Activated CD4-positive, alpha-beta memory T cell treated with anti-CD3 and anti-CD28 coated beads for 36 hours (primary cell): ENCODE measurements at regions of chr9 and their contacts with region 1.

Region 1: DNA sequence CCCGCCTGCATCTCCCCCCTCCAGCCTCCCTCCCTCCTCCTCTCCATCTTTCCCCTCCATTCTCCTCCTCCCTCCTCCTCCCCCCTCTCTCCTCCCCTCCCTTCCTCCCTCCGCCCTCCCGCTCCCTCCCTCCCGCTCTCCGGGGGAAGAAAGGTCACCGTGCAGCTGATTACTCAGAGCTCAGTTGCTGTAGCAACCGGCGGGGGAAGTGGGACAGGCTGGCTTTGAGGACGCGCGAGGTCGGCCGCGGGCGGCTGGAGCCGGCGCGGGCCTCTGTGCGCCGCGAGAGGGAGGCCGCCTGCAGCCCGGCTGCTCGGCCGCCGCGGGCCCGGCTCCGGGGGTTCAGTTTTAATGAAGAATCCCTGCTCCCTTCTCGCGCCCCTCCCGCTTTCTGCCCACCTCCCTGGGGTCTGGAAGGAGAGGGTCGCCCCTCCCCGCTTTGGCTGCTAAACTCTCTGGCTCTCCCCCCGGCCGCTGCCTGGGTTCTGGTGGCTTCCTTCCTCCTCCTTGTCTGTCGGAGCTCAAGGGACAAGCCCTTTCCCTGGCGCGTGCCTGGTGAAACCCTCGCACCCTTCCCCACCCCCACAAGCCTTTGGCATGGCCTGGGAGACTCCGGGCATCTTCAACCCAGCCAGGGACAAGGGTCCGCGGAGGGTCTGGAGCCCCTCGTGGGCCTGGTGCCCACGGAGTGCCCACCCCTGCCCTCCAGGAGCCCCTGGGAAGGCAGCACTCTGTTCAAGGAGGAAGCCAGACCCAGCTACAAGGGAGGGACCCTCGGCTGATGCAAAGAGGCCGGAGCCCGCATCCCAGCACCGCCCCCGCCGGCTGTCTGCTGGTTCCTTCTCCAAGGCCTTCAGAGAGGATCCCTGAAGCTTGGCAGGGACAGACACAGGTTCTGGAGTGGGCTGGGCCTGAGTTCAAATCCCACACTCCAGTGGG is 160.3 kb downstream of the C9orf50 start:
- DNase-seq: peak; percentile 95
- H3K4me3 Mint-ChIP-seq: peak overlapping the region; percentile 73
- H3K27ac Mint-ChIP-seq: peak overlapping the region; percentile 86
- H3K4me1 Mint-ChIP-seq: peaks cover 38% of the 10 kb centered on the region
- H3K27me3 Mint-ChIP-seq: no peaks in the 10 kb centered on the region

Region 2: GRCh38 chr9:129028192-129028957 is 432.2 kb before region 1 on chr9 and contains the start of gene SH3GLB2:
- CTCF ChIA-PET with region 1: no interaction called
- POLR2A ChIA-PET with region 1: no interaction called
- intact Hi-C with region 1: loop called (anchors 2 kb)
- DNase-seq: peak; percentile 97
- H3K4me3 Mint-ChIP-seq: peak within 1 kb of the TSS; percentile 84
- H3K27ac Mint-ChIP-seq: peak within 1 kb of the TSS; percentile 55
- H3K4me1 Mint-ChIP-seq: peaks cover 22% of the 10 kb centered on the region
- H3K27me3 Mint-ChIP-seq: no peaks in the 10 kb centered on the region
- total RNA-seq, gene SH3GLB2: 59.5 to 62.3 TPM

Region 3: GRCh38 chr9:129413537-129414376 is 46.8 kb before region 1 on chr9:
- CTCF ChIA-PET with region 1: no interaction called
- POLR2A ChIA-PET with region 1: interaction called, 4 read pairs
- intact Hi-C with region 1: loop called (anchors 2 kb)
- DNase-seq: peak; percentile 98
- H3K4me3 Mint-ChIP-seq: peak overlapping the region; percentile 73
- H3K27ac Mint-ChIP-seq: peak overlapping the region; percentile 98
- H3K4me1 Mint-ChIP-seq: peaks cover 14% of the 10 kb centered on the region
- H3K27me3 Mint-ChIP-seq: no peaks in the 10 kb centered on the region

Region 4: DNA sequence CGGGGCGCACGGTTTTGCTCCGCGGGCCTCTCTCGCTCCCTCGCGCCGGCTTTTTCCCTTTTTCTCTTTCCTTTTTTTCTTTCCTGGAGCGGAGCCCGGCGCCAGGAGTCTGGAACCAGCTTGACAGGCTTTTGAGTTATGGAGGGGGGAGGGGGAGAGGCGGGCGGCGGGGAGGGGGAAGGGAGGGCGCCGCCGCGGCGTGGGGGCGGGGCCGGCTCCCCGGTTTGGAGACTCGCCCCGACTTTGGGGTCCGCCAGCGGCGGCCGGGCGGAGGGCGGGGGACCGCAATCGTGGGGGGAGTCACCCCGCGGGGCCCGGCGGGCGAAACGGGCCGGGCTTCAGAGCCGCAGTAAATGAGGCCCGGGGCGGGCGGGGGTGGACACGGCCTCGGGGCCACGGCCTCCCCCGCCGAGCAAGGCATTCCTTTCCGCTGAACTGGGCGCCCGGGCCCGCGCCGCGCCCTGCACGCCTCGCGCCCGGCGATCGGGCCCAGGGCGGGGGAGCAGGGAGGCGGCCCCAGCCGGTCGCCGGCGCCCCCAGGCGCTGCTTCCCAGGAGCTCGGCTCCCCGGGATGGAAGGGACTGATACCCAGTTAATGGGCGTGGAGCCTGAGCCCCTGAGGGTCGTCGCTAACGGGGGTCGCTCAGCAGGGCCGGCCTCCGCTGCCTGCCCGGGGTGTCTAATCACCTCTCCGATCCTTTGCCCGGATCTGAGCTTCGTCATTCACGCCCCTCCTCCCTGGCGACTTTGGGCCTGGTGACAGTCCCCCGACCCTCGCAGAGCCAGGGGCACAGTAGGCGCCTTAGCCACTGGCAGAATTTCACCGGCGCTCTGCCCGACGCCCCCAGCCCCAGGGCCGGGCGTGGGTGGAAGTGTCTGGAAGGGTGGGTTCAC is 22.2 kb after region 1 on chr9:
- CTCF ChIA-PET with region 1: interaction called, 7 read pairs
- POLR2A ChIA-PET with region 1: interaction called, 22 read pairs
- intact Hi-C with region 1: loop called (anchors 1 kb)
- DNase-seq: peak; percentile 45
- H3K4me3 Mint-ChIP-seq: peak overlapping the region; percentile 61
- H3K27ac Mint-ChIP-seq: peak overlapping the region; percentile 69
- H3K4me1 Mint-ChIP-seq: peaks cover 42% of the 10 kb centered on the region
- H3K27me3 Mint-ChIP-seq: peaks cover 2% of the 10 kb centered on the region

Region 5: DNA sequence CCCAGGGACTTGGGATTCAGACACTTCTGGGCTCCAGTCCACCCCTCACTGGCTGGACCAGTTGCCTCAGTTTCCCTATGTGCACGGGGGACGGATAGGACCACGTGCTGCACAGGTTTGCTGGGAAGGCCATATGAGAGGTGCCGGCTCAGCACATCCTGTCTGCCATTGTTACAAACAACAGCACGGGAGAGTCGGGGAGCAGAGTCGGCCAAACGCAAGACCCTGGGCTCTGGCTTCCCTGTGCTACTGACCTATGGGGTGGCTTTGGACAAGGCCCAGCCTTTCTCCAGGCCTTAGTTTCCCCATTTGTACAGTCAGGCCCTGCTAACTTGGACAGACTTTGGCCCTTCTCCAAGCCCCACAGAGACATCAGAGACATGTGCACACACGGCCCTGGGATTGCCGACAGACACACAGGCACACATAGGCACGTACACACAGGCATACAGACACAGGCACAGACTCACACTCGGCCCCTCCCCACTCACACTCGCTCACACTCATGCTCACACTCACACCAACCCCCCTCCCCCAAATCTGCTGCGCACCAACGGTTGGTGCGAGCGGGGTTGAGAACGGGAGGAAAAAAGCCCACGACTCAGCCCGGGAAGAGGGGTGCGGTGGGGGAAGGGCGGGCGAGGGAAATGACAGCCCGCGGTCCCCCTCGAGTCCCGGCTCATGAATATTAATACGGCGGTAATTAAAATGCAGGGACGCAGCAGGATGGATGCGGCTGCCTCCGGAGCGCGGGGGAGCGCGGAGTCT is 27.2 kb after region 1 on chr9:
- CTCF ChIA-PET with region 1: interaction called, 7 read pairs
- POLR2A ChIA-PET with region 1: interaction called, 22 read pairs
- intact Hi-C with region 1: loop called (anchors 1 kb)
- DNase-seq: peak; percentile 58
- H3K4me3 Mint-ChIP-seq: peak overlapping the region; percentile 85
- H3K27ac Mint-ChIP-seq: peak overlapping the region; percentile 97
- H3K4me1 Mint-ChIP-seq: peaks cover 68% of the 10 kb centered on the region
- H3K27me3 Mint-ChIP-seq: no peaks in the 10 kb centered on the region

Region 6: DNA sequence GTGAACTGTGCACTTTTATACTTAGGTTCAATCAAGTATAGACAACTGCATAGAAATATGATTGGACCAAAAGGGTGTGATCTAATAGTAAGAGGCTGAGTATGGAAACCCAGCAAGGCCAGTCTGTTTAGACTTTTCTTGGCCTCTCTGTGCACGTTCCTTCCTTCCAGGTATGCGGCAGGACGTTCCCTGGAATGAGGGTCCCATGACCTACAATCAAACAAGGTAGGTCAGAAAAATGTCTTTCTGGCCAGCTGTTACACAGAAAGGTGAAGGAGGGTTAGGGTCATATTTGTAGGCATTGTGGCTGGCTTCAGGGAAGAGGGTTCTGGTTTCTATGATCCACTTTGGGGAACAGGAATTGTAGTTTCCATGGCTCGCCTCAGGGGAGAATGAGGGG is 75.4 kb after region 1 on chr9:
- CTCF ChIA-PET with region 1: no interaction called
- POLR2A ChIA-PET with region 1: no interaction called
- intact Hi-C with region 1: no loop called
- DNase-seq: no peak
- H3K4me3 Mint-ChIP-seq: no peak overlapping the region
- H3K27ac Mint-ChIP-seq: no peak overlapping the region
- H3K4me1 Mint-ChIP-seq: no peaks in the 10 kb centered on the region
- H3K27me3 Mint-ChIP-seq: peaks cover 4% of the 10 kb centered on the region

Region 7: GRCh38 chr9:129802851-129803675 is 342.5 kb after region 1 on chr9 and contains the start of gene TOR1B:
- CTCF ChIA-PET with region 1: no interaction called
- POLR2A ChIA-PET with region 1: no interaction called
- intact Hi-C with region 1: no loop called
- DNase-seq: peak; percentile 96
- H3K4me3 Mint-ChIP-seq: peak within 1 kb of the TSS; percentile 84
- H3K27ac Mint-ChIP-seq: peak within 1 kb of the TSS; percentile 85
- H3K4me1 Mint-ChIP-seq: peaks cover 17% of the 10 kb centered on the region
- H3K27me3 Mint-ChIP-seq: no peaks in the 10 kb centered on the region
- total RNA-seq, gene TOR1B: 20.6 to 23.0 TPM

Region 8: DNA sequence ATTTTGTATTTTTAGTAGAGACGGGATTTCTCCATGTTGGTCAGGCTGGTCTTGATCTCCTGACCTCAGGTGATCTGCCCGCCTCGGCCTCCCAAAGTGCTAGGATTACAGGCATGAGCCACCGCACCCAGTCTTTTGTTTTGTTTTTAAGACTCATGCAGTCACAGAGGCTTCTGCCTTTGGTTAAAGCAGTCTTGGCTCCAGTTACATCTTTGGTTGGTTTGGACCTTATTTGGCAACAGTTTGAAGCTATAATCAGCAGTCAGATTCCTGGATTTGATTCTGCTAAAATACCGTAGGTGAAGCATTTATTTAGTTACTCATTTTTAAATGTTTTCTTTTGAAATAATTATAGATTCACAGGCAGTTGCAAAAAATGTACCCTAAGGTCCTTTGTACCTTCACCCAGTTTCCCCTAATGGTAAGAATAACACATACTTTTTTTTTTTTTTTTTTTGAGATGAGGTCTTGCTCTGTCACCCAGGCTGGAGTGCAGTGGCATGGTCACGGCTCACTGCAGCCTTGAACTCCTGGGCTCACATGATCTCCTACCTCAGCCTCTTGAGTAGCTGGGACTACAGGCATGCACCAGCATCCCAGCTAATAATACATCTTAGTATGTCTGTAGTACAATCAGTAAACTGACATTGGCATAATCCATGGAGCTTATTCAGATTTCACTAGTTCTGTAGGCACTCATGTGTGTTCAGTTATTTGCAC is 390.4 kb after region 1 on chr9:
- CTCF ChIA-PET with region 1: no interaction called
- POLR2A ChIA-PET with region 1: no interaction called
- intact Hi-C with region 1: no loop called
- DNase-seq: no peak
- H3K4me3 Mint-ChIP-seq: no peak overlapping the region
- H3K27ac Mint-ChIP-seq: no peak overlapping the region
- H3K4me1 Mint-ChIP-seq: peaks cover 23% of the 10 kb centered on the region
- H3K27me3 Mint-ChIP-seq: no peaks in the 10 kb centered on the region